ENCODE measurements at regions of chr21 and their contacts with region 1.

Region 1: DNA sequence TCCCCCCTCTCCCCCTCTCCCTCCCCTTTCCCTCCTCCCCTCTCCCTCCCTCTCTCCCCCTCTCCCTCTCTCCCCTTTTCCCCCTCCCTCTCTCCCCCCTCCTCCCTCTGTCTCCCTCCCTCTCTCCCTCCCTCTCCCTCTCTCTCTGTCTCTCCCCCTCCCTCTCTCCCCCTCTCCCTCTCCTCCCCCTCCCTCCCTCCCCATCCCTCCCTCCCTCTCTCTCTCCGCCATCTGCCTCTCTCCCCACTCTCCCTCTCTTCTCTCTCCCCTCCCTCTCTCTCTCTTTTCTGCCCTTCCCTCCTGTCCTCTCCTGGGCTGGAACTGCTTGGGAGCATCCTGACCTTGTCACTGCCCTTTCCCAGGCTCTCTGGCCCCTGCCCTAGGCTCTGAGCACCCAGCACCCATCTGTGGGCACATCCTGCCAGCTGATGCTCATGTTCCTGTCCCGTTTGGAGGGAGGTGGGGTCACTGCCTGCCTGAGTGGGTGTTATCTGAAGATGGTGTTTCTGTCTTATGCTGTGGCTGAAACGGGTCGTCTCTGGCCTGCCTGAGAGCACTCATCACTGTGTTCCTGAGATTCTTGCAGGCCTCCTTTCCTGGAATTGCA is 10.8 kb downstream of the FTCD start:
- DNase-seq: peak in 3 of 10 donors; percentile 47 to 83 (median 77)

Region 2: DNA sequence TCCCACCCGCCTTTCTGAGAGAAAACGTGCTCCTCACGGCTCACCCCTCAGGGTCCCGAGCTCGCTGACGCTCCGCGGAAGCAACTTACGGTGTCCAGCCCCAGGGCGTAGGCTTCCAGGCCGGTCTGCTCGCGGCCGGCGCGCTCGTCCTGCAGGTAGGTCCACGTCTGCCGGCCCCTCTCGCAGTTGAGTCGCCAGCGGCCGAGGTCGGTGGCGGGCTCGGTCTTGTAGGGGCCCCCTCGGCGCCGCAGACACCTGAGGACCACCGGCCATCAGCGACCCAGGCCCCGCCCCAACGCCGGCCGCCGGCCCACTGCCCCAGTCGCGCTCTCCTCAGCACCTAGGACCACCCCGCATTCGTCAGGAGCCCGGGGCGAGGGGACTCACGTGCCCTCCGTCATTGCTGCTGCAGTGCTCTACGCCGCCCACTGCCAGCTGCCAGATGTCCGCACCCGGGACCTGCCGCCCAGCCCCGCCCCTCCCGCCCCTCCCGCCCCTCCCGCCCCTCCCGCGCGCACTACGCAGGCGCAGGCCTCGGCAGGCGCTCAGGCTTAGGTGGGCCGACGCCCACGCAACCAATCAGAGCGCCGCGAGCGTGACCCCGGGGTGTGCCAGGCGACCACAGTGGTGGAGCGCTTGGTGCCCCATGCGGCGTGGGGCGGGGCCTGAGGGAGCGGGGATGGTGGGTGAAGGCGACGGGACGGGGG is 83.9 kb after region 1 on chr21 and contains the start of gene LSS:
- intact Hi-C with region 1: loop called (anchors 2 kb)
- DNase-seq: peak; percentile 91 to 100 (median 96)

Region 3: DNA sequence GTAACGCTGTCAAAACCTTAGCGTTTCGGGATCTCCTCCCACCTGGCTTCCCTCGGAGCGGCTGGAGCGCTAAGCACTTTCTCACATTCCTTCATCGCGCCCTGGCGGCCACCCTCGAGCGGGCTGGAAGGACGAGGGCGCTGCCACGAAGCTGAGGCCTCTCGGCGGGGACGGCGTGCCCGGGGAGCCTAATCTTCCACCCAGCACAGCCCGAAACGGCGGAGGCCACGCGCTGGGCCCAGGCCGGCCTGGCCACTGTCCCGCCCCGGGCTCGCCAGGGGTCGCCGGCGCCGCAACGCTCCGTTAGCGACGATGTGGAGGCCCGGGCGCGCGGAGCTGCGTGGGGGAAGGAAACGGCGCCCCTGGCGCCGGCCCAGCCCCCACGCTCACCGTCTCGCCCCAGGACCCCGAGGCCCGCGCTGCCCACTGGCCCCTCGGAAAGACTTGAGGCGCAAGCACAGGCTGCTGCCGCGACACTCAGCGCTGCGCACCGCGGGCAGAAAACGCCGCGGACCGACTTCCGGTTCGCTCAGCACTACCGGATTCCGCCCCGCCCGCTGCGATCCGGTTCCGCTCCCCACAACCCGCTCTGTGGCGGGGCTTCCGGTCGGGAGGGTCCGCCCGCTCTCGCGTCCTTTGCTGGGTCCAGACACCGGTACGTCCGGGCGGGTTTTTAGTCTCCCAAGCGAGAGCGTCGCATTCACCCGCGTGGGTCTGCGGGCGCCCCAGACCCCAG is 141.4 kb after region 1 on chr21 and contains the start of gene YBEY:
- intact Hi-C with region 1: loop called (anchors 5 kb)
- DNase-seq: peak; percentile 81 to 98 (median 92)